ENCODE measurements at regions of chr5 and their contacts with region 1.

Region 1: DNA sequence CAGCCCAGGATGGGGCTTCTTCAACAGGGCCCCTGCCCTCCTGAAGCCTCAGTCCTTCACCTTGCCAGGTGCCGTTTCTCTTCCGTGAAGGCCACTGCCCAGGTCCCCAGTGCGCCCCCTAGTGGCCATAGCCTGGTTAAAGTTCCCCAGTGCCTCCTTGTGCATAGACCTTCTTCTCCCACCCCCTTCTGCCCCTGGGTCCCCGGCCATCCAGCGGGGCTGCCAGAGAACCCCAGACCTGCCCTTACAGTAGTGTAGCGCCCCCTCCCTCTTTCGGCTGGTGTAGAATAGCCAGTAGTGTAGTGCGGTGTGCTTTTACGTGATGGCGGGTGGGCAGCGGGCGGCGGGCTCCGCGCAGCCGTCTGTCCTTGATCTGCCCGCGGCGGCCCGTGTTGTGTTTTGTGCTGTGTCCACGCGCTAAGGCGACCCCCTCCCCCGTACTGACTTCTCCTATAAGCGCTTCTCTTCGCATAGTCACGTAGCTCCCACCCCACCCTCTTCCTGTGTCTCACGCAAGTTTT is 23.6 kb downstream of the PCDHGC5 start:
- DNase-seq: peak; percentile 94
- ATAC-seq: peak; percentile 38
- H3K4me3 Mint-ChIP-seq: peak overlapping the region; percentile 70
- H3K27ac Mint-ChIP-seq: peak overlapping the region; percentile 84
- H3K4me1 Mint-ChIP-seq: peaks cover 43% of the 10 kb centered on the region
- H3K27me3 Mint-ChIP-seq: no peaks in the 10 kb centered on the region
- CTCF ChIP-seq: peak; percentile 87

Region 2: GRCh38 chr5:141320225-141321169 is 192.0 kb before region 1 on chr5 and contains the start of gene TAF7:
- CTCF ChIA-PET with region 1: interaction called, 5 read pairs
- POLR2A ChIA-PET with region 1: no interaction called
- intact Hi-C with region 1: loop called (anchors 10 kb)
- DNase-seq: peak; percentile 93
- ATAC-seq: peak; percentile 93
- H3K4me3 Mint-ChIP-seq: peak within 1 kb of the TSS; percentile 95
- H3K27ac Mint-ChIP-seq: peak within 1 kb of the TSS; percentile 98
- H3K4me1 Mint-ChIP-seq: peaks cover 25% of the 10 kb centered on the region
- H3K27me3 Mint-ChIP-seq: no peaks in the 10 kb centered on the region
- CTCF ChIP-seq: peak; percentile 89
- total RNA-seq, gene TAF7: 56.2 to 58.1 TPM

Region 3: GRCh38 chr5:141420855-141421496 is 91.5 kb before region 1 on chr5 and contains the start of gene PCDHGA11:
- CTCF ChIA-PET with region 1: interaction called, 71 read pairs
- POLR2A ChIA-PET with region 1: no interaction called
- intact Hi-C with region 1: no loop called
- DNase-seq: peak; percentile 69
- ATAC-seq: peak; percentile 61
- H3K4me3 Mint-ChIP-seq: peak within 1 kb of the TSS; percentile 74
- H3K27ac Mint-ChIP-seq: no peak within 1 kb of the TSS
- H3K4me1 Mint-ChIP-seq: peaks cover 8% of the 10 kb centered on the region
- H3K27me3 Mint-ChIP-seq: peaks cover 72% of the 10 kb centered on the region
- CTCF ChIP-seq: peak; percentile 76
- total RNA-seq, gene PCDHGA11: not detected

Region 4: GRCh38 chr5:141475625-141476131 is 36.8 kb before region 1 on chr5 and contains the start of gene PCDHGC3:
- CTCF ChIA-PET with region 1: interaction called, 22 read pairs
- POLR2A ChIA-PET with region 1: interaction called, 5 read pairs
- intact Hi-C with region 1: no loop called
- DNase-seq: peak; percentile 69
- ATAC-seq: peak; percentile 91
- H3K4me3 Mint-ChIP-seq: peak within 1 kb of the TSS; percentile 77
- H3K27ac Mint-ChIP-seq: no peak within 1 kb of the TSS
- H3K4me1 Mint-ChIP-seq: peaks cover 25% of the 10 kb centered on the region
- H3K27me3 Mint-ChIP-seq: peaks cover 52% of the 10 kb centered on the region
- CTCF ChIP-seq: peak; percentile 24
- total RNA-seq, gene PCDHGC3: not detected

Region 5: GRCh38 chr5:141557681-141558136 is 45.3 kb after region 1 on chr5:
- CTCF ChIA-PET with region 1: interaction called, 34 read pairs
- POLR2A ChIA-PET with region 1: no interaction called
- intact Hi-C with region 1: no loop called
- DNase-seq: peak; percentile 87
- ATAC-seq: peak; percentile 81
- H3K4me3 Mint-ChIP-seq: no peak overlapping the region
- H3K27ac Mint-ChIP-seq: peak overlapping the region; percentile 18
- H3K4me1 Mint-ChIP-seq: peaks cover 20% of the 10 kb centered on the region
- H3K27me3 Mint-ChIP-seq: no peaks in the 10 kb centered on the region
- CTCF ChIP-seq: peak; percentile 94

Region 6: GRCh38 chr5:141923448-141924352 is 411.2 kb after region 1 on chr5 and contains the start of gene DELE1:
- CTCF ChIA-PET with region 1: no interaction called
- POLR2A ChIA-PET with region 1: no interaction called
- intact Hi-C with region 1: no loop called
- DNase-seq: peak; percentile 96
- ATAC-seq: peak; percentile 93
- H3K4me3 Mint-ChIP-seq: peak within 1 kb of the TSS; percentile 82
- H3K27ac Mint-ChIP-seq: peak within 1 kb of the TSS; percentile 91
- H3K4me1 Mint-ChIP-seq: peaks cover 24% of the 10 kb centered on the region
- H3K27me3 Mint-ChIP-seq: no peaks in the 10 kb centered on the region
- CTCF ChIP-seq: no peak
- total RNA-seq, gene DELE1: 50.1 to 57.4 TPM

Measured in activated CD8-positive, alpha-beta T cell treated with anti-CD3 and anti-CD28 coated beads for 36 hours (primary cell).